Upper lobe of right lung (tissue), 1 donor: ENCODE measurements at regions of chr14 and their contacts with region 1.

Region 1: GRCh38 chr14:21367582-21368144 is 16.2 kb downstream of the SUPT16H start:
- DNase-seq: no peak
- ATAC-seq: no peak
- H3K4me3 ChIP-seq: no peak overlapping the region
- H3K27ac ChIP-seq: no peak overlapping the region
- H3K4me1 ChIP-seq: no peaks in the 10 kb centered on the region
- H3K27me3 ChIP-seq: no peaks in the 10 kb centered on the region
- CTCF ChIP-seq: no peak

Region 2: GRCh38 chr14:21257394-21257909 is 110.2 kb before region 1 on chr14:
- intact Hi-C with region 1: loop called (anchors 10 kb)
- DNase-seq: peak; percentile 22
- ATAC-seq: peak; percentile 62
- H3K4me3 ChIP-seq: no peak overlapping the region
- H3K27ac ChIP-seq: no peak overlapping the region
- H3K4me1 ChIP-seq: peaks cover 66% of the 10 kb centered on the region
- H3K27me3 ChIP-seq: no peaks in the 10 kb centered on the region
- CTCF ChIP-seq: no peak

Region 3: GRCh38 chr14:21326972-21327371 is 40.7 kb before region 1 on chr14:
- intact Hi-C with region 1: no loop called
- DNase-seq: no peak
- ATAC-seq: no peak
- H3K4me3 ChIP-seq: no peak overlapping the region
- H3K27ac ChIP-seq: no peak overlapping the region
- H3K4me1 ChIP-seq: no peaks in the 10 kb centered on the region
- H3K27me3 ChIP-seq: no peaks in the 10 kb centered on the region
- CTCF ChIP-seq: no peak

Region 4: DNA sequence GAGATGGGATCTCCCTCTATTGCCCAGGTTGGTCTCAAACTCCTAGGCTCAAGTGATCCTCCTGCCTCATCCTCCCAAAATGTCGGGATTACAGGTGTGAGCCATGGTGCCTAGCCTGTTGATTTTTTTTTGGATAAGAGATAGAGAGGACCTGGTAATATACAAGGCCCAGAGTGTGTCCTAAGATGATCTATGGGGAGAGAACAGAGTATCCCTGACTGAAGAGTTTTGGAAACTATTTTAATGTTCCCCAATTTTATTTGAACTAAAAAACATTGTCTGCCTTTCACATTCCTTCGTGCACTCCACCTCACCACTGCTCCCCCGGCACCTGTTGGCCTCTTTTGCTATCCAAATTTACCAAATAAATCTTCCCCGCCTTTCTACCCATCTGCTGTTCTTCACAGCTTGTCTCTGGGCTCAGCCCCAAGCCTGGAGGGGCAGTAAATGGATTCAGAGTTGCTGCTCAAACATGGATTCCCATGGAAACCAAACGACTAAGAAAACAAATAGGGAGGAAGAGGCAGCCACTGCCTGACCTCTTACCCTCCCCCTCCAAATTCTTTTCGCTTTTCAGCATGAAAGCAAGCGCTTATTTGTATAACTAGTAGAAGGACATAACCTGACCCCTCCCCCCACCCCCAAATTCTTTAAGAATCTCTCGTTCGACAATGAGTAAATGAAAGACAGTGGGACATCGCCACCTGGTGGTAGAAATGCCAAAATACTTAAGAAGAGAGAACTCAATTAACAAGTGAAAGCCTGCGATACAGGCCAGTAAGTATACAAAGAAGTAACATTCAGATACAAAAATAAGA is 189.6 kb after region 1 on chr14:
- intact Hi-C with region 1: no loop called
- DNase-seq: peak; percentile 72
- ATAC-seq: peak; percentile 91
- H3K4me3 ChIP-seq: peak overlapping the region; percentile 35
- H3K27ac ChIP-seq: peak overlapping the region; percentile 86
- H3K4me1 ChIP-seq: peaks cover 5% of the 10 kb centered on the region
- H3K27me3 ChIP-seq: no peaks in the 10 kb centered on the region
- CTCF ChIP-seq: peak; percentile 74